WTC11 (cell line): ENCODE measurements at regions of chr1 and their contacts with region 1.

Region 1: GRCh38 chr1:225917536-225917935 is 6.5 kb downstream of the PYCR2 start:
- DNase-seq: no peak
- ATAC-seq: no peak
- H3K4me3 Mint-ChIP-seq: no peak overlapping the region
- H3K27ac Mint-ChIP-seq: peak overlapping the region; percentile 41
- H3K4me1 Mint-ChIP-seq: peaks cover 16% of the 10 kb centered on the region; the same call in 1 of the 2 replicates
- H3K27me3 Mint-ChIP-seq: no peaks in the 10 kb centered on the region
- CTCF ChIP-seq: no peak

Region 2: DNA sequence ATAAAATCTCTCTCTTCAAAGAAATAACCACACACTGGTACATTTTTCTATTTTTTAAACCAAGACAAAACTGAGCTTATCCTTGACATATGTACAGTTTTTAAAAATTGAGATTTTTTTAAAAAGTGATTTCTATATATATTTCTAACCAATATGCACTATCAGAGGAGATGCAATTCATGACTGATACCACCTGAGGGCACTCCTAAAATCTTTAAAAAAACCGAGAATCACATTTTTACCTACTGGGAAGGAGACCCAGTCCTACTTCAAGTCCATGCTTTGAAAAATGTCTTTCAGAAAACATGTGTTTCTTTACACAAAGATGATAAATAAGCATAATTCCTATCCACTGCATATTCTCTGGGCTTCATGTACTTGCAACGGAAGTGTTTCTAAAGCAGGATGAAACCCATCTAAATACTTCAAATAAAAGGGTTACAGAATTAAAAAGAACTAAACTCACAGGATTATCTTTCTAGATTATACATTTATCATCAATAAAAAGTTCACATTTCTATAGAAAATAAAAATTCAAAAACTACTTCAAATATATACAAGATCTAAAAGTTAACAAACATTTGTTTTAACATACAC is 363.2 kb before region 1 on chr1:
- CTCF ChIA-PET with region 1: no interaction called
- POLR2A ChIA-PET with region 1: interaction called, 10 read pairs
- DNase-seq: no peak
- ATAC-seq: no peak; the same call in 1 of the 2 replicates
- H3K4me3 Mint-ChIP-seq: no peak overlapping the region
- H3K27ac Mint-ChIP-seq: no peak overlapping the region
- H3K4me1 Mint-ChIP-seq: peaks cover 5% of the 10 kb centered on the region; the same call in 1 of the 2 replicates
- H3K27me3 Mint-ChIP-seq: no peaks in the 10 kb centered on the region
- CTCF ChIP-seq: no peak